ENCODE measurements at regions of chr1 and their contacts with region 1.

Region 1: GRCh38 chr1:44217809-44218410 is 4.6 kb downstream of the DMAP1 start:
- H3K4me3 Mint-ChIP-seq: no peak overlapping the region
- H3K27ac Mint-ChIP-seq: no peak overlapping the region
- H3K4me1 Mint-ChIP-seq: peaks cover 30% of the 10 kb centered on the region
- H3K27me3 Mint-ChIP-seq: no peaks in the 10 kb centered on the region

Region 2: DNA sequence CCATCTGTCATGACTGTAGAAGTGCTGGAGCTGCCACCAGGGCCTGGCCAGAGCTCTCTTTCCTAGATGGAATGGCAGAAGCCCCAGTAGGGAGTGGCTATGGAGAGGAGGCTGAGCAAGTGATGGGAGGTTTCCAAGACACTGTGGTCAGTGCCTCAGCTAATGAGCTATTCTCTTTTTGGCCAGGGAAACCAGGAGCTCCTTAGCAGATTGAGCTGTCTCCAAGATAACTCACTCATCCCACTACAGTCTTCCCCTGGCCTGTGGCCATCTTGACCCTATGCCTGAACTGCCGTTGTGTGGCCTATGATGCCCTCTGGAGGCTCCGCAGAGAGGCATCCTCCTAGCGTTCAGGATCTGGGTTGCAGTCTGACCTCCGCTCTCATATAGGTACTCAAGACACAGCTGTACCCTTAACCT is 76.7 kb after region 1 on chr1:
- intact Hi-C with region 1: loop called (anchors 2 kb)
- H3K4me3 Mint-ChIP-seq: no peak overlapping the region
- H3K27ac Mint-ChIP-seq: no peak overlapping the region
- H3K4me1 Mint-ChIP-seq: peaks cover 5% of the 10 kb centered on the region
- H3K27me3 Mint-ChIP-seq: no peaks in the 10 kb centered on the region

Region 3: GRCh38 chr1:44318097-44319088 is 100.5 kb after region 1 on chr1:
- intact Hi-C with region 1: loop called (anchors 1 kb)
- H3K4me3 Mint-ChIP-seq: no peak overlapping the region
- H3K27ac Mint-ChIP-seq: no peak overlapping the region
- H3K4me1 Mint-ChIP-seq: peaks cover 7% of the 10 kb centered on the region
- H3K27me3 Mint-ChIP-seq: no peaks in the 10 kb centered on the region

Region 4: GRCh38 chr1:44594871-44595746 is 377.2 kb after region 1 on chr1:
- intact Hi-C with region 1: loop called (anchors 2 kb)
- H3K4me3 Mint-ChIP-seq: no peak overlapping the region
- H3K27ac Mint-ChIP-seq: no peak overlapping the region
- H3K4me1 Mint-ChIP-seq: peaks cover 18% of the 10 kb centered on the region
- H3K27me3 Mint-ChIP-seq: no peaks in the 10 kb centered on the region

Region 5: DNA sequence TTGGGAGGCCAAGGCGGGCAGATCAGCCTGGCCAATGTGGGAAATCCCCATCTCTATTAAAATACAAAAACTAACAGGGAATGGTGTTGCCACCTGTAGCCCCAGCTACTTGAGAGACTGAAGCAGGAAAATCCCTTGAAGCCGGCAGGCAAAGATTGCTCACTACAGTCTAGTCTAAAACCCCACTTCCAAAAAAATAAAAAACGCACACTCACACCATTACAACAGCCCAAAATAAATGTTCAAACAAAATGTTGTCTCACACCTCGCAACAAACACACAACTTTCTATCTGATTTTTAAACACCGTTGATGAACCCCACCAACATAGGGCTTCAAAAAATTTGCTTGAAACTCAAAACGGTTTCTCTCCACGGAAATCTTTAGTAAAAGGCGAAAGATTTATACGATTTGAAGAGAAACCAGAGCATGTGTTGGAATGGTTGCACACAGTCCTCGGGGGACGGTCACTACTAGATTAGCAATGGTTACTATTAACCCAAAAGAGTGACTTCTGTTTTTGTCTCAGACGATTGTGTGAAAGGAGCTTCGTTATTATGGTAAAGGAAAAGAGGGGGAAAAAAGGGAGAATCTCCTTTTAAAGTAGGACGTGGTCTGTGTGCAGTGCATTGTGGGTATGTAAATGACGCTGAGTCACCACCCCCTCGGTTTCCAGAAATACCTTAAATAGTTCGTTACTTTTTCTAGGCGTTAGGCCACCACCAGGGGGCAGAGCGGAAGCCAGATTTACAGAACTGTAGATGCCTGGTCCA is 513.0 kb after region 1 on chr1 and contains the start of gene RNU5D-1:
- intact Hi-C with region 1: no loop called
- H3K4me3 Mint-ChIP-seq: peak within 1 kb of the TSS; percentile 65
- H3K27ac Mint-ChIP-seq: peak within 1 kb of the TSS; percentile 96
- H3K4me1 Mint-ChIP-seq: peaks cover 40% of the 10 kb centered on the region
- H3K27me3 Mint-ChIP-seq: no peaks in the 10 kb centered on the region